Body of pancreas (tissue), 4 donors: ENCODE measurements at regions of chr16 and their contacts with region 1.

Region 1: DNA sequence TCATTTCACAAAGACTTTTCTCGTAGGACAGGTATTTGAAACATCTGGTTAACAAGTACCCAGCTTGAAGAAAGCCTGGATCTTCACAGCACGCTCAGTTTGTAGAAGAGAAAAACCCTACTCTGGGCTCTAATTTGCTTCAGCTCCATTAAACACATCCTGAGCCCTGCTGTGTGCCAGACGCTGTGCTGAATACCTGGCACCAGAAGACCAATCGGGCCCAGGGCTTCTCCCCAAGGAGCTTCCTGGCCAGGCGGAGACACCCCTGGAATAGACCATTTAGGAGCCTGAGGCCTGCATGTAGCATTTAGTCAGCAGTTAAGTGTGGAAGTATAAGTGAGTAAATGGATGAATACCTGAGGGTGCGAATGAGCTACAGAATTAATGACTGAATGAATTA is 8.9 kb upstream of the ABAT start:
- DNase-seq: no peak
- ATAC-seq: no peak
- H3K4me3 ChIP-seq: no peak overlapping the region
- H3K27ac ChIP-seq: no peak overlapping the region
- H3K4me1 ChIP-seq: no peaks in the 10 kb centered on the region
- H3K27me3 ChIP-seq: no peaks in the 10 kb centered on the region
- CTCF ChIP-seq: no peak
- POLR2A ChIP-seq: no peak

Region 2: GRCh38 chr16:8878521-8878911 is 213.0 kb after region 1 on chr16:
- intact Hi-C with region 1: loop called (anchors 5 kb)
- DNase-seq: peak in 1 of 4 donors; percentile 40
- ATAC-seq: peak; percentile 34
- H3K4me3 ChIP-seq: no peak overlapping the region
- H3K27ac ChIP-seq: peak overlapping the region in 2 of 4 donors; percentile 56 to 70
- H3K4me1 ChIP-seq: peaks cover 15% of the 10 kb centered on the region
- H3K27me3 ChIP-seq: no peaks in the 10 kb centered on the region
- CTCF ChIP-seq: no peak
- POLR2A ChIP-seq: no peak